Right lobe of liver (tissue), 6 donors: ENCODE measurements at regions of chr12 and their contacts with region 1.

Region 1: DNA sequence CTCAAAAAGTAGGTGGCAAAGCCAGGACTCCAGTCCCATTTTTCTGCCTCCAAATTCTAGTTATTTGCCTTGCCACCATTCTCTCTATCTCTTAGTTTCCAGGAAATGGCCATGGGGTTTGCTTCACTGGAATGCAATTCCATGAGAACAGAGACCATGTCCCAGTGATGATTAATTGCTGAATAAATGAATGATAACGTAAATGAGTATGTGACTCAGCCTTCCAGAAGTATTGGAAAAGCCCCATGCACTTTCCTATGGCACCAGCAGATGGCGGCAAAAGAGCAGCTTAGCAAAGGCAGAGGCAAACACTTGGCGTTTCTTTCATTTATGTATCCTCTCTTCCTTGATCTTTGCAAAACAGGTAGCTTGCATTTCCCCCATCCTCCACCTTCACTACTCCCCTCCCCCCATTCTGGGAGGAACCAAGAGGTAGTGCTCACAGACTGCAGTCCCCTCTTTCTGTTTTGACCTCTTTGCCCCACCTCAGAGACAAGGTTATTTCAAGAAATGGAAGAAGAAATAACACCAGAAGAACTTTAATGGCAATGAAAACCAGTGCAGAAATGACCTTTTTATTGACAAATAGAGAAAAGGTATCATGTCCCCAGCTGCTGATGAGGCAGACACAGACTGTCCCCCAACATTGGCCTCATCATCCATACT is 21.3 kb downstream of the TBX3 start:
- DNase-seq: peak in 2 of 3 donors; percentile 72 to 77
- ATAC-seq: peak; percentile 82 to 94 (median 90)
- H3K4me3 ChIP-seq: no peak overlapping the region
- H3K27ac ChIP-seq: no peak overlapping the region
- H3K4me1 ChIP-seq: peaks cover 0 to 2% (median 0%) of the 10 kb centered on the region in 4 donors
- H3K27me3 ChIP-seq: peaks cover 0 to 6% of the 10 kb centered on the region in 2 donors
- CTCF ChIP-seq: peak; percentile 92 to 96 (median 95)
- POLR2A ChIP-seq: no peak

Region 2: GRCh38 chr12:115632308-115632707 is 969.7 kb after region 1 on chr12:
- intact Hi-C with region 1: loop called in 1 of 2 experiments (anchors 10 kb)
- DNase-seq: no peak
- ATAC-seq: no peak
- H3K4me3 ChIP-seq: no peak overlapping the region
- H3K27ac ChIP-seq: no peak overlapping the region
- H3K4me1 ChIP-seq: no peaks in the 10 kb centered on the region
- H3K27me3 ChIP-seq: no peaks in the 10 kb centered on the region
- CTCF ChIP-seq: peak; percentile 20 to 34 (median 20)
- POLR2A ChIP-seq: no peak

Region 3: DNA sequence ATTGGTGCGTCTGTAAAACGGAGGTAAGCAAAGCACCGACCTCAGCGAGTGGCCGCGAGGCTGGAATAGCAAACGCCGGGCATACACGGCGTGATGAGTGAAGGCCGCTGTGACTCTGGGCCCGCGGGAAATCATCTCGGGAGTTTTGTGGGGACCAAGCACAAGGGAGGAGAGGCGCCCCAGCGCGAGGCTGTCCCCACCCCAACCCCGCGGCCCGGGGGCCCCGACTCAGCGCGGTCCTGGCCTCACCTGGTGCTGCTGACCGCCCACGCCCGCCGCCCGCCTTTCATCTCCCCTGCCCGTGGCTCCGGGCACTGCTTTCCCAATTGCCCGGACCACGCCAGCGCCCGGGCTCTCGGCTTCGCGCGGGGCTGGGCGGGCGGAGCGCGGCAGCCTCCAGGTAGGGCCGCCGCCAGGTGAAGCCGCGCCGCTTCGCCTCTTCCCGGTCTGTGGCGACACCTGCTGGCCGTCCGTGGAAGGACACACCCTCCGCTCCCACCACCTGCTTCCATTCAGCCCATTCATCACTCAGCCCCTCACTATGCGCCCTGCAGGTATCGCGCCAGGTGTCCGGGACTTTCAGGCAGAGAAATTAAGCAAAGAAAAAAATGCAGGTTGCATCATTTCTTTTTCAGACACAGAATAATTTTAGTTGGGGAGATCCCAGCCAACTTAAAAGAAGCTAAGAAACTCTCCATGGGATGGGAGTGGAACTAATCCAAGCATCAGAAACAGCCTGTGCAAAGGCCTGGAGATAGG is 1254.4 kb after region 1 on chr12:
- intact Hi-C with region 1: loop called (anchors 5 to 10 kb)
- DNase-seq: peak; percentile 70 to 77 (median 71)
- ATAC-seq: peak; percentile 95 to 98 (median 98)
- H3K4me3 ChIP-seq: peak overlapping the region in 1 of 3 donors; percentile 5
- H3K27ac ChIP-seq: no peak overlapping the region
- H3K4me1 ChIP-seq: peaks cover 0 to 5% (median 0%) of the 10 kb centered on the region in 4 donors
- H3K27me3 ChIP-seq: no peaks in the 10 kb centered on the region
- CTCF ChIP-seq: peak; percentile 91 to 96 (median 93)
- POLR2A ChIP-seq: no peak